Activated CD8-positive, alpha-beta memory T cell treated with anti-CD3 and anti-CD28 coated beads, Interleukin-2, amount 10 ng/mL, durations not matched to agents 7 days and 5 days (primary cell): ENCODE measurements at regions of chr3 and their contacts with region 1.

Region 1: GRCh38 chr3:172332256-172333041 is 115.8 kb downstream of the GHSR start:
- DNase-seq: peak; percentile 65
- ATAC-seq: peak; percentile 88
- H3K4me3 Mint-ChIP-seq: no peak overlapping the region
- H3K27ac Mint-ChIP-seq: peak overlapping the region; percentile 49
- H3K4me1 Mint-ChIP-seq: peaks cover 10% of the 10 kb centered on the region
- H3K27me3 Mint-ChIP-seq: no peaks in the 10 kb centered on the region

Region 2: DNA sequence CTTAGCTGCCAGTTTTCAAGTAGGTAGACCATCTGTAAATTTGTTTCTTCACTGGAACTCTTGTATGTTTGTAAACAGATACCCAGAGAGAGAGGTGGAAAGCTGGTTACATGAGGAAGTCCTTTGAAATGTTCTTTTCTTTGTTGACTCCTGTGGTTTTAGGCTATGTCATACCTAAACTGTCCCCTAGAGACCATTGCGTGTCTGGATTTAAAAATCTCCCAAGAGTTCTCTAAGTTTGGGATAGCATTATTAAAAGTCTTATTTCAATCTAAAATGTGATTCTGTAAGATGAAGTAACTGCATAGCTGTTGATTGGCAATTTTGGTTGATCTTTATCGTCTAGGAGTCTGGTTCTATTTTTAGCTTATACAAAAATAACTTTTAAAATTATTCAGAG is 11.4 kb before region 1 on chr3:
- CTCF ChIA-PET with region 1: interaction called, 21 read pairs
- DNase-seq: no peak
- ATAC-seq: no peak
- H3K4me3 Mint-ChIP-seq: no peak overlapping the region
- H3K27ac Mint-ChIP-seq: no peak overlapping the region
- H3K4me1 Mint-ChIP-seq: peaks cover 20% of the 10 kb centered on the region
- H3K27me3 Mint-ChIP-seq: no peaks in the 10 kb centered on the region

Region 3: GRCh38 chr3:172351895-172352466 is 19.5 kb after region 1 on chr3:
- CTCF ChIA-PET with region 1: interaction called, 10 read pairs
- DNase-seq: no peak
- ATAC-seq: no peak
- H3K4me3 Mint-ChIP-seq: no peak overlapping the region
- H3K27ac Mint-ChIP-seq: no peak overlapping the region
- H3K4me1 Mint-ChIP-seq: peaks cover 5% of the 10 kb centered on the region
- H3K27me3 Mint-ChIP-seq: no peaks in the 10 kb centered on the region

Region 4: DNA sequence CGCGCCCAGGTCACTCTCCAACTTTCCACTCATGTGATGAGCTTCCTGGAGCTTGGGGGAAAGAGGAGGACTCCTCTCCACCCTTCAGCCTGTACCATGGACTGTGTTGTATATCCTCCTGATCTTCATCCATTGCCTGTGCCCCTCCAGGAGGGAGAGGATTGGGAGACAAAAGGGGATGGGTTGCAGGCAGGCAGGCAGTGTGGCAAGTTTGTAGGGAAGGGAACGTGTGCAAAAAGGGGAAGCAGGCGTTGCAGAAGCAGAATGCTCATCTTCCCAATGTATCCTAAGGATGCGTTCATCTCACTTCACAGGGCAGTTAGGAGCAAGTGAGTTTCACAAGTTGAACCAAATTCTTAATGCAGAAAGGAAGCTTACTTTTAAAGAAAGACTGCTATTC is 143.9 kb after region 1 on chr3:
- CTCF ChIA-PET with region 1: interaction called, 14 read pairs
- DNase-seq: no peak
- ATAC-seq: no peak
- H3K4me3 Mint-ChIP-seq: peak overlapping the region; percentile 79
- H3K27ac Mint-ChIP-seq: peak overlapping the region; percentile 9
- H3K4me1 Mint-ChIP-seq: peaks cover 19% of the 10 kb centered on the region
- H3K27me3 Mint-ChIP-seq: peaks cover 10% of the 10 kb centered on the region

Region 5: DNA sequence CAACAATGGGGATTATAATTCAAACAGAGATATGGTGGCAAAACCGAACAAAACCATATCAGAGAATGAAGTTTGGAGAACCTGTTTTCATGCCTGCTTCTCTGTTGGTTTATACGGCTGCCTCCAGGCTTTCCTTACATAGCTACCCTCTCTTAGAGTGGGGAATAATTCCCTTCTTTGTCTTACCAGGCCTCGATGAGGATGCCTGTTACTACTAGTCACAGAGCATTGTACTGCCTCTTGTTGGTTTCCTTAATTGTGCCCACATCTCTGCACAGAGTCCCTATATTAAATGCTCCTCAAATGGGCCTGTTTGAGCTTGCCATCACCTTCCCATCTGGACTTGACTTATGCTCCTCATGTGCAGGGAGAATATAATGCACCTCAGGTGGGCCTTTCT is 285.5 kb after region 1 on chr3:
- CTCF ChIA-PET with region 1: interaction called, 15 read pairs
- DNase-seq: no peak
- ATAC-seq: no peak
- H3K4me3 Mint-ChIP-seq: no peak overlapping the region
- H3K27ac Mint-ChIP-seq: no peak overlapping the region
- H3K4me1 Mint-ChIP-seq: peaks cover 23% of the 10 kb centered on the region
- H3K27me3 Mint-ChIP-seq: no peaks in the 10 kb centered on the region

Region 6: DNA sequence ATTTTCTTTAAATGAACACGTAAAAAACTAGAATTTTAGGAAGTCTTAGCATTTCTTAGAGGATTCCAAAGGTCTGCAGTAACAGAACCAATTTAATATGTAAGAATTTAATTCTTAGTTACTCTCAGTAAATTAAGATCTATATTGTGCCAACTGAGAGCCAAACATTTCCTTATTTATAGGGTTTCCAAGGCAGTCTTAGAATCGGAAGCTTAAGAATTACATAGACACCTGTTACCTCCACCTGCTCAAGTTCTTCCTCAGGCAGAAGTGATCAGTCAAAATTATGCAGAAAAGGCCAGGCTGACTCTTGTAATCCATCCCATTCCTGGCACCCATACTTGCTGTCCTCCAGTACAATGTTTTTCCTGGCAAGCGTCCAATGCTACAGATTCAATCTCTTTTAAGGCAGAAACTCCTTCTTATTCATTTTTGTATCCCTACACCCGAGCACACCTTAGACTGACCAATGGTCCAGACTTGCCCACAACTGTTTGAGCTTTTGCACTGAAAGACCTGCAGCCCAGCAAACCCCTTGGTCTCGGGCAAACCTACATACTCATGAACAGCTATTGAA is 314.1 kb after region 1 on chr3:
- CTCF ChIA-PET with region 1: no interaction called
- DNase-seq: no peak
- ATAC-seq: no peak
- H3K4me3 Mint-ChIP-seq: no peak overlapping the region
- H3K27ac Mint-ChIP-seq: no peak overlapping the region
- H3K4me1 Mint-ChIP-seq: no peaks in the 10 kb centered on the region
- H3K27me3 Mint-ChIP-seq: no peaks in the 10 kb centered on the region

Region 7: GRCh38 chr3:172666873-172667694 is 334.6 kb after region 1 on chr3:
- CTCF ChIA-PET with region 1: interaction called, 21 read pairs
- DNase-seq: peak; percentile 88
- ATAC-seq: peak; percentile 100
- H3K4me3 Mint-ChIP-seq: no peak overlapping the region
- H3K27ac Mint-ChIP-seq: no peak overlapping the region
- H3K4me1 Mint-ChIP-seq: peaks cover 18% of the 10 kb centered on the region
- H3K27me3 Mint-ChIP-seq: no peaks in the 10 kb centered on the region